B cell (primary cell): ENCODE measurements at regions of chr6 and their contacts with region 1.

Region 1: GRCh38 chr6:87154993-87155841 is at the start of gene ZNF292:
- DNase-seq: peak; percentile 98
- ATAC-seq: peak; percentile 82
- H3K4me3 ChIP-seq: peak within 1 kb of the TSS; percentile 83 to 96 (median 87)
- H3K4me3 Mint-ChIP-seq: peak within 1 kb of the TSS; percentile 92
- H3K27ac ChIP-seq: peak within 1 kb of the TSS; percentile 96 to 97
- H3K27ac Mint-ChIP-seq: peak within 1 kb of the TSS; percentile 97
- H3K4me1 ChIP-seq: peaks cover 28 to 35% of the 10 kb centered on the region in 2 donors
- H3K4me1 Mint-ChIP-seq: peaks cover 51% of the 10 kb centered on the region
- H3K27me3 ChIP-seq: no peaks in the 10 kb centered on the region
- H3K27me3 Mint-ChIP-seq: no peaks in the 10 kb centered on the region
- CTCF ChIP-seq: no peak
- total RNA-seq, gene ZNF292: 84.1 and 86.5 TPM in 2 replicates

Region 2: GRCh38 chr6:87182321-87182720 is 27.1 kb after region 1 on chr6:
- CTCF ChIA-PET with region 1: no interaction called
- POLR2A ChIA-PET with region 1: no interaction called
- intact Hi-C with region 1: loop called (anchors 2 kb)
- DNase-seq: peak; percentile 31
- ATAC-seq: peak; percentile 58
- H3K4me3 ChIP-seq: no peak overlapping the region
- H3K4me3 Mint-ChIP-seq: peak overlapping the region; percentile 52
- H3K27ac ChIP-seq: peak overlapping the region in 1 of 2 donors; percentile 77
- H3K27ac Mint-ChIP-seq: peak overlapping the region; percentile 54
- H3K4me1 ChIP-seq: peaks cover 27 to 33% of the 10 kb centered on the region in 2 donors
- H3K4me1 Mint-ChIP-seq: peaks cover 61% of the 10 kb centered on the region
- H3K27me3 ChIP-seq: no peaks in the 10 kb centered on the region
- H3K27me3 Mint-ChIP-seq: no peaks in the 10 kb centered on the region
- CTCF ChIP-seq: no peak

Region 3: DNA sequence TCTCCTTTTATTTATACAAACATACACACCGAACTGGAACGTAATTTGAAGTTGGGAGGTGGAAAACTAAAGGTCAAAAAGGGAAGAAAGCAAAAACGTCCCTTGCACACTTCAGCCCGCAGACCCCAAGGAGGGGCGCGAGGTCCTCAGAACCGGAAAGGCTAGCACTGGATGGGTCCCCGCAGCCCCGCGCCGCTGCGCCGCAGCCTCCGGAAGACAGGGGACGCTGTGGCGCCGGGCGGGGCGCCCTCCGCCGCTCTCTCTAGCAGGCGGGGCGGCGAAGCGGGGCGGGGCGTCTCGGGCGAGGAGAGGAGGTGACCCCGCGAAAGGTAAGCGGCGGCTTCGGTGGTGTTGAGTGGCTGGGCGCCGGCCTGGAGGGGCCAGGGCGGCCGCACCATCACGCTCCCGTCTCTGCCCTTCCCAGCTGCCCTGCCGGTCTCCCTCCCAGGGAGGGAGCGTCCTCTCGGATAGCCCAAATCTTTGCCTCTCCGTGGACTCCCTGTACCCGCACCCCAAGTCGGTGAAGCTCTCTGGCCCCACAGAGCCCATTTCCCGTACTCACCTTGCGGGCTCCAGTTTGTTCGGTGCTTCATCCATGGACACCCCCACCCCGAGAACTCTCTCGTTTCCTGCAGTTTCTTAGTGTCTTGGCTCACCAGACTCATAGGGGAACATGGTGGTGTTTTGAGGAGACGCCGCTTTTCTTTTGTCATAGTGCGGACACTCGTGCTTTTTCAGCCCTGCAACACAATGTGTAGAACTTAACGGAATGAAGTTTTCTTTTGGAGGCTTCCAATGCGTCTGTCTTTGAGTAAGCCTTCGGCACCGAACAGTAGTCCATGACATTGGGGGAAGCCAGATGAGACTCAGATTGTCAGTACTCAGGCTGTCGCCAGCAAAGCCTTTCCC is 167.3 kb after region 1 on chr6 and contains the start of gene SMIM8:
- CTCF ChIA-PET with region 1: no interaction called
- POLR2A ChIA-PET with region 1: no interaction called
- intact Hi-C with region 1: loop called (anchors 1 kb)
- DNase-seq: peak; percentile 87
- ATAC-seq: peak; percentile 100
- H3K4me3 ChIP-seq: peak within 1 kb of the TSS; percentile 78 to 87 (median 81)
- H3K4me3 Mint-ChIP-seq: peak within 1 kb of the TSS; percentile 95
- H3K27ac ChIP-seq: peak within 1 kb of the TSS; percentile 42 to 74
- H3K27ac Mint-ChIP-seq: peak within 1 kb of the TSS; percentile 88
- H3K4me1 ChIP-seq: peaks cover 4 to 13% of the 10 kb centered on the region in 2 donors
- H3K4me1 Mint-ChIP-seq: peaks cover 25% of the 10 kb centered on the region
- H3K27me3 ChIP-seq: no peaks in the 10 kb centered on the region
- H3K27me3 Mint-ChIP-seq: no peaks in the 10 kb centered on the region
- CTCF ChIP-seq: peak; percentile 99
- total RNA-seq, gene SMIM8: 18.7 and 19.1 TPM in 2 replicates

Region 4: GRCh38 chr6:87472525-87473418 is 317.6 kb after region 1 on chr6 and contains the start of gene SLC35A1:
- CTCF ChIA-PET with region 1: no interaction called
- POLR2A ChIA-PET with region 1: no interaction called
- intact Hi-C with region 1: loop called (anchors 1 kb)
- DNase-seq: peak; percentile 93
- ATAC-seq: peak; percentile 97
- H3K4me3 ChIP-seq: peak within 1 kb of the TSS; percentile 72 to 95 (median 85)
- H3K4me3 Mint-ChIP-seq: peak within 1 kb of the TSS; percentile 99
- H3K27ac ChIP-seq: peak within 1 kb of the TSS; percentile 85 to 98
- H3K27ac Mint-ChIP-seq: peak within 1 kb of the TSS; percentile 100
- H3K4me1 ChIP-seq: peaks cover 7 to 11% of the 10 kb centered on the region in 2 donors
- H3K4me1 Mint-ChIP-seq: peaks cover 13% of the 10 kb centered on the region
- H3K27me3 ChIP-seq: peaks cover 0 to 7% (median 0%) of the 10 kb centered on the region in 4 experiments
- H3K27me3 Mint-ChIP-seq: peaks cover 9% of the 10 kb centered on the region
- CTCF ChIP-seq: peak; percentile 27
- total RNA-seq, gene SLC35A1: 15.1 and 15.6 TPM in 2 replicates

Region 5: DNA sequence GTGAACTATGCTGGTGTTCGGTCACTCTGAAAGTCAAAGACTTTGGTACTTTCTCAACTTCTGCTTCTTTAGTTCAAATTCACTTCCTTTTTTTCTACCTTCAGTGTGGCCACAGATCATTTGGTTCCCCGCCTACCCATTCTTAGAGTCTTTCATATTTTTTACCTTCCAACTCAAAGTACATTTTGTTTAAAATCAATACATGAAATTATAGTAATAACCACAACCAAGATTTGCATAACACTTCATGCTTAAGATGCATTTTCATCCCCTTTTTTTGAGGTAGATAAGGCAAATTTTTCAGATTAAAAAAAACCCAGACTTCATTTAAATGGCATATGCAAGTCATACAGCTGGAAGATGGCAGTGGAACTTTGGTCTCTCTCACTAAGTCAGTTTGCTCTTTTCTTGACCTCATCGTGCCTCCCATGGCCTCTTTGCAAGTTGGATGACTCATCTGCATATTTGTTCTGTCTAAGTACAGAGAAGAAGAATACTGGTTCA is 1022.8 kb after region 1 on chr6:
- CTCF ChIA-PET with region 1: no interaction called
- POLR2A ChIA-PET with region 1: no interaction called
- intact Hi-C with region 1: loop called (anchors 5 kb)
- DNase-seq: peak; percentile 79
- ATAC-seq: peak; percentile 61
- H3K4me3 ChIP-seq: peak overlapping the region in 1 of 5 experiments; percentile 45
- H3K4me3 Mint-ChIP-seq: peak overlapping the region; percentile 57
- H3K27ac ChIP-seq: peak overlapping the region; percentile 61 to 85
- H3K27ac Mint-ChIP-seq: peak overlapping the region; percentile 81
- H3K4me1 ChIP-seq: peaks cover 52 to 63% of the 10 kb centered on the region in 2 donors
- H3K4me1 Mint-ChIP-seq: peaks cover 58% of the 10 kb centered on the region
- H3K27me3 ChIP-seq: no peaks in the 10 kb centered on the region
- H3K27me3 Mint-ChIP-seq: no peaks in the 10 kb centered on the region
- CTCF ChIP-seq: no peak

Region 6: GRCh38 chr6:89080542-89081422 is 1925.6 kb after region 1 on chr6 and contains the start of gene PNRC1:
- CTCF ChIA-PET with region 1: no interaction called
- POLR2A ChIA-PET with region 1: no interaction called
- intact Hi-C with region 1: loop called (anchors 10 kb)
- DNase-seq: peak; percentile 100
- ATAC-seq: peak; percentile 76
- H3K4me3 ChIP-seq: peak within 1 kb of the TSS; percentile 81 to 100 (median 98)
- H3K4me3 Mint-ChIP-seq: peak within 1 kb of the TSS; percentile 99
- H3K27ac ChIP-seq: peak within 1 kb of the TSS; percentile 99
- H3K27ac Mint-ChIP-seq: peak within 1 kb of the TSS; percentile 98
- H3K4me1 ChIP-seq: peaks cover 25 to 29% of the 10 kb centered on the region in 2 donors
- H3K4me1 Mint-ChIP-seq: peaks cover 38% of the 10 kb centered on the region
- H3K27me3 ChIP-seq: no peaks in the 10 kb centered on the region
- H3K27me3 Mint-ChIP-seq: no peaks in the 10 kb centered on the region
- CTCF ChIP-seq: no peak
- total RNA-seq, gene PNRC1: 460 and 486 TPM in 2 replicates